Esophagus muscularis mucosa (tissue), 4 donors: ENCODE measurements at regions of chr12 and their contacts with region 1.

Region 1: GRCh38 chr12:115916910-115917668 is 360.4 kb downstream of the MED13L start:
- DNase-seq: no peak
- H3K4me3 ChIP-seq: peak overlapping the region in 1 of 4 donors; percentile 36
- H3K27ac ChIP-seq: no peak overlapping the region
- H3K4me1 ChIP-seq: peaks cover 3 to 6% (median 5%) of the 10 kb centered on the region in 4 donors
- H3K27me3 ChIP-seq: peaks cover 0 to 90% (median 15%) of the 10 kb centered on the region in 4 donors
- CTCF ChIP-seq: peak; percentile 88 to 98 (median 93)
- EP300 ChIP-seq: no peak
- POLR2A ChIP-seq: no peak

Region 2: GRCh38 chr12:113980537-113981337 is 1936.4 kb before region 1 on chr12:
- intact Hi-C with region 1: loop called (anchors 10 kb)
- DNase-seq: no peak
- H3K4me3 ChIP-seq: no peak overlapping the region
- H3K27ac ChIP-seq: no peak overlapping the region
- H3K4me1 ChIP-seq: no peaks in the 10 kb centered on the region
- H3K27me3 ChIP-seq: peaks cover 0 to 65% (median 5%) of the 10 kb centered on the region in 4 donors
- CTCF ChIP-seq: peak; percentile 89 to 93 (median 90)
- EP300 ChIP-seq: no peak
- POLR2A ChIP-seq: no peak

Region 3: DNA sequence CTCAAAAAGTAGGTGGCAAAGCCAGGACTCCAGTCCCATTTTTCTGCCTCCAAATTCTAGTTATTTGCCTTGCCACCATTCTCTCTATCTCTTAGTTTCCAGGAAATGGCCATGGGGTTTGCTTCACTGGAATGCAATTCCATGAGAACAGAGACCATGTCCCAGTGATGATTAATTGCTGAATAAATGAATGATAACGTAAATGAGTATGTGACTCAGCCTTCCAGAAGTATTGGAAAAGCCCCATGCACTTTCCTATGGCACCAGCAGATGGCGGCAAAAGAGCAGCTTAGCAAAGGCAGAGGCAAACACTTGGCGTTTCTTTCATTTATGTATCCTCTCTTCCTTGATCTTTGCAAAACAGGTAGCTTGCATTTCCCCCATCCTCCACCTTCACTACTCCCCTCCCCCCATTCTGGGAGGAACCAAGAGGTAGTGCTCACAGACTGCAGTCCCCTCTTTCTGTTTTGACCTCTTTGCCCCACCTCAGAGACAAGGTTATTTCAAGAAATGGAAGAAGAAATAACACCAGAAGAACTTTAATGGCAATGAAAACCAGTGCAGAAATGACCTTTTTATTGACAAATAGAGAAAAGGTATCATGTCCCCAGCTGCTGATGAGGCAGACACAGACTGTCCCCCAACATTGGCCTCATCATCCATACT is 1254.4 kb before region 1 on chr12:
- intact Hi-C with region 1: loop called (anchors 2 kb)
- DNase-seq: no peak
- H3K4me3 ChIP-seq: no peak overlapping the region
- H3K27ac ChIP-seq: no peak overlapping the region
- H3K4me1 ChIP-seq: peaks cover 0 to 18% (median 13%) of the 10 kb centered on the region in 4 donors
- H3K27me3 ChIP-seq: peaks cover 0 to 79% (median 30%) of the 10 kb centered on the region in 4 donors
- CTCF ChIP-seq: peak; percentile 96
- EP300 ChIP-seq: no peak
- POLR2A ChIP-seq: no peak

Region 4: DNA sequence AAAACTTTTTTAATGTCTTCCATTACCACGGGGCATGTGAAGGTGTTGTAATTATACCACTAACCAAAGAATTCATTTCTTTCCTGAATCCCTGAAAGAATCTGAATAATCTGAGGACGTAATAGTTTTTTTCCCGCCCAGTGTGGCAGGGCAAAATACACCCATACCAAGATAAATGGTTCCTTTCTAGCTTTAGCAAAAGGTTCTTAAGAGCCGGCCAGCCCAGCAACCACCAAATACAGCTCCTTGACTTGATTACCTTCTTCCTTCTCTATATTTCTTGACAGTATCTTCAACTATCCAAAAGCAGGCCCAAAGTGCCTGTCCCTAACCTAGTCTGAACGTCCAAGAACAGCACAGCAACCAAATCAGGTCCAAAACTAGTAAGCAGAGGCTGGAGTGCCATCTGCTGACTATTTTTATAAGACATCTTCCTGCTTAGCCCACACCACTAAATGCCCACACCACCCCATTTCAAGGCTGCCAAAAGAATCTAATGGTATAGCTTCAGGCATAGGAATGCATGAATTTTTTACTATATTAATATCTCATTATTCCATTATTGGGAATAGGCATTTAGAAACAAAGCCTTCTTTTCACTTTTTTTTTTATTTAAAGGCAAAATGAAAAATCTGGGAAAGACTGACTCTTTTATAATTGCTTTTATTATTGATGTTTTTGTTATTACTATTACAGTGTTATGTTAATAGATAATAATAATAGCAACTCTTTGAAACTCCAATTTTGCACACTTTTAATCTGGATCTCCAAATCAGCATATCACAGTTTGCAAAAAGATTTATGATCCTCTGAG is 164.0 kb before region 1 on chr12:
- intact Hi-C with region 1: loop called (anchors 10 kb)
- DNase-seq: no peak
- H3K4me3 ChIP-seq: no peak overlapping the region
- H3K27ac ChIP-seq: no peak overlapping the region
- H3K4me1 ChIP-seq: peaks cover 0 to 5% (median 0%) of the 10 kb centered on the region in 4 donors
- H3K27me3 ChIP-seq: peaks cover 0 to 39% (median 0%) of the 10 kb centered on the region in 4 donors
- CTCF ChIP-seq: peak; percentile 63 to 66 (median 64)
- EP300 ChIP-seq: no peak
- POLR2A ChIP-seq: no peak